ENCODE measurements at regions of chr20 and their contacts with region 1.

Region 1: DNA sequence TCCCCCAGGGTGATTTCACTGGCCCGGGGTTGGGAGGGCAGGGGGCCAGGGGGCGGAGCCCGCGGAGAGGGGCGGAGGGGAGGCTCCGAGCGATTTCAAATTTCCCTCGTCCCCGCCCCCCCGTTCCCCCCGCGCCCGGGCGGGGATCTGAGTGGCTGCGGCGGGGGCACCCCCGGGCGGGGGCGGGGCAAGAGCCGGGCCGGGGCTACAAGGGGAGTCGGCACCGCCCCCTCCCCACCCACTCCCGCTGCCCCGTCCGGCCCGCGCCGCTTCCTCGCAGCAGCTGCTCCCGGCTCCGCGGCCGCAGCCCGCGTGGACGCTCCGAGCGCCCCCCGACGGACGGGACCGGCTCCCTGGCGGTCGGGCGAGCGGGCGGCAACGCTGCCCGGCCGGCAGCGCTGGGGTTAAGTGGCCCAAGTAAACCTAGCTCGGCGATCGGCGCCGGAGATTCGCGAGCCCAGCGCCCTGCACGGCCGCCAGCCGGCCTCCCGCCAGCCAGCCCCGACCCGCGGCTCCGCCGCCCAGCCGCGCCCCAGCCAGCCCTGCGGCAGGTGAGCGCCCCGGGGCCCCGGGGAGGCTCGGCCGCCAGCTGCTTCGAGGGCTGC is at the start of gene DNMT3B:
- DNase-seq: peak; percentile 87
- H3K4me3 Mint-ChIP-seq: peak within 1 kb of the TSS; percentile 85
- H3K27ac Mint-ChIP-seq: peak within 1 kb of the TSS; percentile 7
- H3K4me1 Mint-ChIP-seq: peaks cover 24% of the 10 kb centered on the region
- H3K27me3 Mint-ChIP-seq: peaks cover 20% of the 10 kb centered on the region

Region 2: GRCh38 chr20:32674362-32674789 is 87.9 kb before region 1 on chr20:
- CTCF ChIA-PET with region 1: interaction called, 21 read pairs
- DNase-seq: peak; percentile 84
- H3K4me3 Mint-ChIP-seq: no peak overlapping the region
- H3K27ac Mint-ChIP-seq: no peak overlapping the region
- H3K4me1 Mint-ChIP-seq: peaks cover 31% of the 10 kb centered on the region
- H3K27me3 Mint-ChIP-seq: peaks cover 11% of the 10 kb centered on the region